Lower lobe of right lung (tissue), 2 donors: ENCODE measurements at regions of chr21 and their contacts with region 1.

Region 1: DNA sequence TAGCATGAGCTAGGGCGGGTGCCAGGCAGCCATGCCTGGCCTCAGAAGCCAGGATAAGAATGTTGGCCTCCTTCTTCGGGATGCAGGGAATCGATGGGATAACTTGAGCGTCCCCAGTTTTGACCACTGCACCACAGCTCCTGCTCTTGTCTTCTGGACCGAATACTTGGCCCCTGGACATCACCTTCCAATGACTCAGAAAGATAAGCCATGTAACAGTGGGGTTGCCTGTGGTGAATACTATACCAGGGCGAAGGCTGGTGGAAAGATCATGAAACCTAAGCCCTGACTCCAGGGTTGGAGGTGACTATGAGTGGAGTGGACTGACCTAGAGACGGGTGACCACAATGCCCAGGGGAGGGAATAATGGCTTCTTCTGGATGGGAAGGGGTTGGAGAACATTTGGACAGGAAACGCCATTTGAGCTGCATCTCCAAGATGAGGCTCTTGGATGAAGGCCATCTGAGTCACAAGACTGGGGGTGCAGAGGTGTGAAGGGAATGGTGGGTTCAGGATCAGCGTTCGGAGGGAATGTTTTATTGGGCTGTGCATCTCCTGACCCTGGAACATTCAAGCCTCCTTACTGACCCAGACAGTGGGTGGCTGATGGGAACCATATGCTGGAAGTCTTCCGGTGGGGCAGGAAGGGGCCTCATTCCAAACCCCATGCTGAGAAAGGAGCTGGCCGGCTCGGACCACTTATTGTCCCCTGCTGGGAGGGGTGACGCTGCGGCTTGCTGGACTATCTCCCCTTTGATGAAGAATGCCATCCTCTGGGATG is 18.5 kb upstream of the KCNE2 start:
- DNase-seq: no peak
- ATAC-seq: peak in 1 of 2 donors; percentile 67
- H3K4me3 ChIP-seq: peak overlapping the region; percentile 9
- H3K27ac ChIP-seq: peak overlapping the region; percentile 63
- H3K4me1 ChIP-seq: peaks cover 8% of the 10 kb centered on the region
- H3K27me3 ChIP-seq: no peaks in the 10 kb centered on the region
- CTCF ChIP-seq: no peak

Region 2: DNA sequence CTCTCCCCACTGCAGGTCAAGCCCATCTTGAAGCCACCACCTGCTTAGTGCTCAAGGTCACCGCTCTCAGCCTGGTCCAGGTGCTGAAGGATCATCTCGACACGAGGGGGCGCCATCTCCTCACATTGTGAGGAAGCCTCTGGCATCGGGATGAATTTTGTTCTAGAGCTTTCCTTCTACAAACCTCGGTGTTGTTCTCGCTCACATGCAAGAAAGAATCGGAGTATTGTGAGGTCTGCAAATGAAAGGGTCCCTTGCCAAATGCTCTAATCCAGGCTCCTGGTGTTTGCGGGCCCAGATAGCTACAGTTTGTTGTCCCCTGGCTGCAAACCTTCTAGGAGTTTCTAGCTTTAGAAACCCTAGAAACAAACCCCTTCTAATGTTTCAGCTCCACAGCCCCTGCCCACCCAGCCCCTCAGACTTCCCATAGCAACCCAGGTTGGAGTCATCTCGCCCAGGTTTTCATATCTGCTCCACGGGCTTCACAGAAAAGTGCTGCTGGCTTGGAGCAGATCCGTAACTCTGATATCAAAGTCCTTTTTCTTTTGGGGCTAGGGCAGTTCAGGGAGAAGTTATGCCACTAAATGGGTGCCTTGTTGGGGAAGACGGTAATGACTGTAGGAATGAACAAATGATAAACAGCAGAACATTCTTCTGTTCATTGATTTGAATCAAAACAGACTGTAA is 421.1 kb before region 1 on chr21:
- intact Hi-C with region 1: loop called (anchors 5 kb)
- DNase-seq: peak; percentile 91
- ATAC-seq: peak; percentile 94
- H3K4me3 ChIP-seq: no peak overlapping the region
- H3K27ac ChIP-seq: no peak overlapping the region
- H3K4me1 ChIP-seq: peaks cover 7% of the 10 kb centered on the region
- H3K27me3 ChIP-seq: no peaks in the 10 kb centered on the region
- CTCF ChIP-seq: peak; percentile 91

Region 3: DNA sequence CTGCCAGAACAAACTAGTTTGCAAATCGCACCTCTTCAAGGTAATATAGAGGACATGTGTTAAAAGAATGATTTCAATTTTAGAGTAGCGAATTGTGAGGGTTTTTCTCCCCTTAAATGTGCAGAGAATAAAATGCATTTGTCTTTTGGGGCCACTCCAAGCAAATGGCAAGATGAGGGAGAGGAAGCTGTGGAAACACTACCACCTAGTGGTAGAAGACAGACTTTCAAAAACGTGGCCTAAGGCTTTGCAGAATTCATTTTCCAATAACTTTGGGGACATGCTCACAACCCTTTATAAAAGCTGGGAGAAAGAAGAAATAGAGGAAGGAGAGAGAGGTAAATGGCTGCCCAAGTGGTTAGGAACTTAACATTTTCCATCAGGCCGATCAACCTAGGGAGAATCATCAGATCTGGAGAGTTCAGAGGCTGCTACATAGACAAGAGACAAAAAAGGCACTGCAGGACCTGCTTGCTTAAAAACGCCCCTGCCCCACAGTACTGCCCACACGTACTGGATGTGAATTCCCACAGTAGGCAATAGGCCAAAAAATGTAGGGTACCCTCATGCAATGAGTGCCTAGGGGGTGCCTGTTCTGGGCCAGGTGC is 285.4 kb after region 1 on chr21:
- intact Hi-C with region 1: no loop called
- DNase-seq: no peak
- ATAC-seq: peak; percentile 69 to 77
- H3K4me3 ChIP-seq: no peak overlapping the region
- H3K27ac ChIP-seq: no peak overlapping the region
- H3K4me1 ChIP-seq: no peaks in the 10 kb centered on the region
- H3K27me3 ChIP-seq: peaks cover 5% of the 10 kb centered on the region
- CTCF ChIP-seq: peak; percentile 82